HEK293T (cell line): ENCODE measurements at regions of chr10 and their contacts with region 1.

Region 1: DNA sequence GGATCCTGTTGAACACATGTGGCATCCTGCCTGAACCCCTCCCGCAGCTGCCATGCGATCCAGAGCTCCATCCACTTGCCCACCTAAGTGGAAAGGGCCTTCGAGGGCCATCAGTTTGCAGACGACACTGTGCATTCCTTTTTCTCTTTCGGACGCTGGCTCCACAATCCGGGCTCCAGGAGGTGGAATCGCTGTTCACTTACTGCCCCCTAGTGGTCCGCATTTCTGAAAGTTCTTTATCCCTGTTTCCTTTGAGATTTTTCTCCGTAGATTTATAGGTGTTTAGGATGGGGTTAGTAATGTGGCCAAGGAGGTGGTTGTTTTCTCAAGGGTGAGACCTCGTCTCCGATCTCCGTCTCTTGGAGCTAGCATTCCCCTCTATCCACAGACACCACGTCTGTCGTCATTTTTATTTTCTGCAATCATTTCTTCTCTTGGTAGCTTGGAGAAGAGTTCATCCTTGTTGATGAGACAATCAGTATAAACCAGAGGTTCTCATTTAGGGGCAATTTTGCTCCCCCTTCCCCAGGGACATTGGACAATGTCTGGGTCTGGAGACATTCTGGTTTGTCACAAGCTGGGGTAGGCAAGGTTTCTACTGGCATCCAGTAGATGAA is 204.6 kb downstream of the ARHGAP21 start:
- DNase-seq: peak; percentile 74

Region 2: DNA sequence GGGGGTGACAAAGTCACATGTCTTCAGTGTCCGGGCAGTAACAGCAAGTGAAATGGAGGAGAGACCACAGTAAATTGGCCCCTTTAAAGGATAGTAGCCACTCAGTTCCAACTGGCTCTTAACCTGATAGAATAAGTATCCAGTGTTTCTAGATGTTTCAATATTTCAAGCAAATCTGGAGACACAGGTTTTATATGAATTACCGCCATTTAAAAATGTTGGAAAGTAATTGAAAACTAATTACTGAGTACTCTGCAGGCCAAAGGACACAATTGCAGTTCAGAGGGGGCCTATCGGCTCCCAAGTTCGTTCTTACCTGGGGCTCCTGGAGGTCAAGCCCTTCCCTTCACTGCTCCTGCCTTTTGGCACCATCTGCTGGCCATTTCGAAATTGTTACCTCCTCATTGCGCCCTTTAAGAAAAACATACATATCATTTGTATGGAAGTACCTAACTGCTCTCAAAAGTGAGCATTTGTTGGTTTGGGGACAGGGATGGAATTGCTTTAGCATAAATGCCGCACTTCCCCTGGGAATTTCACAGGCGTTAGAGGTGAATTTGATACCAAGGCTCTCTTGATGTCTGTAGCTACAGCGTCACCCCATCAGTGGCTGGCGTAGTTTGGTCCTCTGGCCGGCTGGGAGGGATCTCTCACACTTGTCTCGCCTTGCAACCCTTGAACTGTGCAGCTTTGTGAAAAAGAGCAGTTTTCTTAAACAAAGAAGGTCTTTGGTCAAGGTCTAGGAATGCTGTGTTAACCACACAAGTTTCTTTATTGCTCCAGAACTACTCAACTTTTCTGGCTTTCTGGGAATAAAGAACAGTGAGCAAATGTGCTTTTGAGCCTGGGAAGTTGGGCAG is 15.4 kb before region 1 on chr10:
- CTCF ChIA-PET with region 1: interaction called, 13 read pairs
- POLR2A ChIA-PET with region 1: no interaction called
- DNase-seq: peak; percentile 57

Region 3: DNA sequence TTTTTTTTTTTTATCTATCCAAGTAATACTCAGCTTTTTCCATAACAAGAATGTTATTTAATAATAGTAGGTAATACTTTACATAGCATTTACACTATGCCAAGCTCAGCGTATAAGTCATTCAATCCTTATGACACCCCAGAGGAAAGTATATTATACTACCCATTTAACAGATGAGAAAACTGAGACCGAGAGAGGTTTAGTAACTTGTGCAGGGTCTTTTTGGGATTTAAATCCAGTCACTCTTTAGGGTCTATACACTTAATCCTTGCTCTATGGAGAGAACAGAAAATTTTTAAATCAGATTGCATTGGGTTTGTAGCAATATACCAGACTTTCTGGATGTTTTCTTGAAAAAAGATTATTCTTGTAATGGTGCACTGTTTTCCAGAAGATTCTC is 12.3 kb after region 1 on chr10:
- CTCF ChIA-PET with region 1: interaction called, 11 read pairs
- POLR2A ChIA-PET with region 1: no interaction called
- DNase-seq: no peak